HEK293T (cell line): ENCODE measurements at regions of chr17 and their contacts with region 1.

Region 1: DNA sequence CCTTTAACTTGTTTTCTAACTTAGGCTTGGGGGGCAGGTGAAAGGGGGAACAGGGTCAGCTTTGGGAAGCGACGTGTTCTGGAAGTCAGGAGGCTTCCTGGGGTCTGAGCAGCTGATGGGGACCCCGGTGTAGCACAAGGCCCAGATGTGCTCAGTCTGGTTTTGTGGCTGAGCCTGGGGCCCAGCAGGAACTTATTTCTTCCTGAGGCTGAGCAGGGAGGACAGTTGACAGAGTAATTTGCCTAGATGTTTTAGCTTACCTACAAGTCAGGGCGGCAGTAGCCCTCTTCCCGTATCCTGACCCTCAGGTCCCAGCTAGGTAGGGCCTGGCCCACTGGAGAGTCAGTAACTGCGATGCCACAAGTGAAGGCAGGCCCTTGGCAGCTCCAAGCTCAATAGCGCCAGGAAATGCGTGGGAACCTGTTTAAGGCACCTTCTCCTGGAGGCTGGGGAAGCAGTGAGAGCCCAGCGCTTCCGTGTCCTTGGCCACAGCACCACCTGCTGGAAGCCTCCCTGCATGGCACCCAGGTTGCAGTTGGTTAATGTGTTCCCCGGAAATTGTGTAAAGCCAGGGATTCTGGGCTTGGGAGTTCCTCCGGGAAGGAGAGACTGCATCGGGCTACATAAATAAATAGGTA is 5.2 kb downstream of the CCR7 start:
- DNase-seq: peak; percentile 87

Region 2: DNA sequence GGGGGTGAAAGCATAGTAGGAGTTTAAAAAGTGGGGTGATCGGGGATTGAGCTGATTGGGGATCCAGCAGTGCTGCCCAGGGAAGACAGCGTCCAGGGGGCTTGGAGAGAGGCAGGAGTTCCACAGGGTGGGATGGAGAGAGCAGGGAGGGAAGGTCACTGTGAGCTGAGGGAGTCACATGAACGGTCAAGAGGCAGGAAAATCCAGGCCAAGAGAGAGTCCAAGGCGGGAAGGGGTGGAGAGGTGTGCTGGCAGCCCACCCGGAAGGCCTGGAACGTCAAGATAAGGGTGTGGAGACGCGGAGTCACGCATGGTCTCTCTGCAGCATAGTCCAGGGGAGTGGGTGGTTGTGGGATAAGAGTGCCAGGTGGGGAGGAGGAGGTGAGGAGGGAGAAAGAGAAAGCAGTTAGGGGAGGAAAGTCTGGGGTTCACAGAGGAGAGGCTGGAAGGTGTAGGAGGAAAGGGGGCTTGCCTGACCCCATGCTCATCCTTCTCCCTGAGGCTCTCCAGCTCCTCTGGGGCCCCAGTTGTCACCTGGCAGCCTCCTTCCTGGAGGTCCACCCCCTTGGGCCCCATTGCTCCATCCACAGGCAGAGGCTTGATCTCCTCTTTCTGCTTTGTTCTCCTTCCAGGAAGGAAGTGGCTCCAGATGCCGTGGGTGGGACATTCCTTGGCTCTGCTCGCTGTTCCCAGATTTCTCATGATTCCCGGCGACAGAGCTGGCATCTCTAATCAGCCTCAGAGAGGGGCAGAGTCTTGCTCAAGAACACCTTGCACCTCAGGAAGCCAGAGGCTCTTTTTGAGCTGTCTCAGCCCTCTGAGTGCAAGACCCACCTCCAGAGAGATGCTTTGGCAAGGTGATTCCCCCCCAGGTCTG is 23.5 kb before region 1 on chr17:
- CTCF ChIA-PET with region 1: interaction called, 17 read pairs
- POLR2A ChIA-PET with region 1: no interaction called
- DNase-seq: no peak

Region 3: GRCh38 chr17:40548982-40549685 is 10.9 kb before region 1 on chr17:
- CTCF ChIA-PET with region 1: interaction called, 14 read pairs
- POLR2A ChIA-PET with region 1: interaction called, 3 read pairs
- DNase-seq: no peak

Region 4: GRCh38 chr17:40775945-40776344 is 215.9 kb after region 1 on chr17:
- CTCF ChIA-PET with region 1: no interaction called
- POLR2A ChIA-PET with region 1: no interaction called
- DNase-seq: no peak